Right ventricle myocardium inferior (tissue), 1 donor: ENCODE measurements at regions of chr12 and their contacts with region 1.

Region 1: GRCh38 chr12:85036241-85036707 is at the starts of genes LRRIQ1 and TSPAN19:
- DNase-seq: peak; percentile 56
- ATAC-seq: peak; percentile 83
- total RNA-seq, gene LRRIQ1: 0.08 TPM
- total RNA-seq, gene TSPAN19: 0.49 TPM

Region 2: GRCh38 chr12:84877340-84877739 is 158.9 kb before region 1 on chr12:
- intact Hi-C with region 1: loop called (anchors 2 kb)
- DNase-seq: no peak
- ATAC-seq: no peak

Region 3: GRCh38 chr12:85266356-85266755 is 230.1 kb after region 1 on chr12:
- intact Hi-C with region 1: no loop called
- DNase-seq: no peak
- ATAC-seq: no peak